ENCODE measurements at regions of chr5 and their contacts with region 1.

Region 1: DNA sequence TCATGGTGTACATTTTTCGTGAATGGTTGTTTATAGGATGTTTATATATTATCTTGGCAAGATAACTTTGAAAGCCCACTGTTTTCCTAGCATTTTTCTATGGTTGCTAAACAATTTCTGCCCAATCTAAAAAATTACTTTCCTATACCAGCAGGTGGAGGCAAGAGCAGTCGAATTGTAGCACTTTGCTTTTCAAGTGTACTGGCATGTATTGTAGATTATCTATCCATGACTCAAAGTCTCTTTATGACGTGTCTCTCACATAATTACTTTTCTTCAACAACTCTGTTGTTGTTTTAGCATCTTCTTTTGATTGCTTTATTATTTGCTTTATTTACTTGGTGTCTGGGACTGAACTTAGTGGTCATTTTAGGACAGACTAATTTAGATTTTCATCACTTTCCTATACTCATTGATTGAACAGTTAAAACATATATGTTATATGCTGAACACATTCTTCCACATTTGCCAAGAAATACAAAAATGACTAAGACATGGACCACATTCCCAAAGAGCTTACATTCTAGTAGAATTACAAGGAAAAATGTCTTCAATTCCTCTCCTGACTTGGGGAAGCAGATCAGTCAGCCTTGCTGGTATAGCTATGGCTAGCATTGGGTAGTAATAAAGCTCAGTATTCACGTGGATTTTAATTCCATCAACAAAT is 20.7 kb downstream of the NLN start:
- DNase-seq: peak; percentile 49
- H3K4me3 Mint-ChIP-seq: no peak overlapping the region
- H3K27ac Mint-ChIP-seq: no peak overlapping the region
- H3K4me1 Mint-ChIP-seq: peaks cover 13% of the 10 kb centered on the region
- H3K27me3 Mint-ChIP-seq: no peaks in the 10 kb centered on the region

Region 2: GRCh38 chr5:65708145-65708544 is 34.6 kb before region 1 on chr5:
- CTCF ChIA-PET with region 1: no interaction called
- intact Hi-C with region 1: no loop called
- DNase-seq: no peak
- H3K4me3 Mint-ChIP-seq: no peak overlapping the region
- H3K27ac Mint-ChIP-seq: no peak overlapping the region
- H3K4me1 Mint-ChIP-seq: peaks cover 12% of the 10 kb centered on the region
- H3K27me3 Mint-ChIP-seq: no peaks in the 10 kb centered on the region

Region 3: GRCh38 chr5:65721720-65722574 is 20.8 kb before region 1 on chr5 and contains the starts of genes NLN and SGTB:
- CTCF ChIA-PET with region 1: interaction called, 5 read pairs
- intact Hi-C with region 1: loop called (anchors 1 kb)
- DNase-seq: peak; percentile 80
- H3K4me3 Mint-ChIP-seq: peak within 1 kb of the TSS; percentile 88
- H3K27ac Mint-ChIP-seq: peak within 1 kb of the TSS; percentile 94
- H3K4me1 Mint-ChIP-seq: peaks cover 13% of the 10 kb centered on the region
- H3K27me3 Mint-ChIP-seq: no peaks in the 10 kb centered on the region
- total RNA-seq, gene NLN: 32.4 to 35.5 TPM
- total RNA-seq, gene SGTB: 16.1 to 17.3 TPM

Region 4: DNA sequence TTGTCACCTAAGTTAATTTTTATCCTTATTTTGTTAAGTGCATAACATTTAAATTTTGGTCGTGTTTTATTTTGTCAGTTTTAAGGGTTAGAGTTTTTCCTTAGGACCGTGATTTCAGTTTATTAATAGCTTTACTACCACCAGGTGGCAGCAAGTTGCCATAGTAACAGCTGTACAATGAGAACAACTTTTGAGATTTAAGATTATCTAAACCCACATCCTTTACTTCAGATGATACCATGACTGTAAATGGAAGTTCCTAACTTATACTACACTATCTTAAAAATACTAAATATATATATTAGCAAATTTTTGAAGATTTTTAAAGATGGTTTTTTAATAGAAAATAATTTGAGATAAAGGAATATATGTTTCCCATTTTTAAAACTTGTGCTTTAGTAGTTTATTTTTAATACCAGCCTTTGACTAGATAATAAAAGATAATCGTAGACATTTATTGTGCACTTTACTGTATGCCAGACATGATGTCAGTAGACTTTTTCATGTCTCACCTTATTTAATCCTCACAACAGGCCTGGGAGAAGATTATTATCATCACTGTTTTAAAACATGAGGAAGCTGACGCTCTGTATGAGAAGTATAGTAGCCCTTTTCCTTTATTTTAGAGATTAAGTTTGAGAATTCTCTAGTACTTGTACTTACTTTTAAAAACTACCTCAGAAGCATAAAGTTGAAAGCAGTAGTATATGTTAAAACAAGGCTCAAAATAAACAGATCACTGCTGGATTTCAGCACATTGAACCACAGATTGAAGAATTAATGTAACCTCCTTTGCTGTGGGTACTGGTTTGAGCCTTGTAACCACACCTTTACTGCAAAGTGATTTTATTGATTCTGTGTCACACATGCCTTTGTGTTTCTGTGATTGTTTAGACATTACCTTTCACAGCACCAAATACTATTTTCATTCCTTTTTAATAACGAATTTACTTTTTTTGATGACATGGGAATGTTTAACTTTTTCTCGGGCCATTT is 428.9 kb after region 1 on chr5:
- CTCF ChIA-PET with region 1: interaction called, 3 read pairs
- intact Hi-C with region 1: loop called (anchors 1 kb)
- DNase-seq: peak; percentile 71
- H3K4me3 Mint-ChIP-seq: no peak overlapping the region
- H3K27ac Mint-ChIP-seq: no peak overlapping the region
- H3K4me1 Mint-ChIP-seq: peaks cover 30% of the 10 kb centered on the region
- H3K27me3 Mint-ChIP-seq: no peaks in the 10 kb centered on the region

Region 5: GRCh38 chr5:66209350-66209749 is 466.7 kb after region 1 on chr5:
- CTCF ChIA-PET with region 1: interaction called, 3 read pairs
- intact Hi-C with region 1: loop called (anchors 1 kb)
- DNase-seq: peak; percentile 44
- H3K4me3 Mint-ChIP-seq: no peak overlapping the region
- H3K27ac Mint-ChIP-seq: no peak overlapping the region
- H3K4me1 Mint-ChIP-seq: no peaks in the 10 kb centered on the region
- H3K27me3 Mint-ChIP-seq: no peaks in the 10 kb centered on the region

Measured in activated naive CD4-positive, alpha-beta T cell treated with anti-CD3 and anti-CD28 coated beads for 36 hours (primary cell).